ENCODE measurements at regions of chr6 and their contacts with region 1.

Region 1: GRCh38 chr6:42879372-42880239 is at the start of gene RPL7L1:
- DNase-seq: peak; percentile 92
- H3K4me3 ChIP-seq: peak within 1 kb of the TSS; percentile 75 to 83
- H3K27ac ChIP-seq: peak within 1 kb of the TSS; percentile 79 to 98
- H3K4me1 ChIP-seq: peaks cover 16% of the 10 kb centered on the region
- H3K27me3 ChIP-seq: no peaks in the 10 kb centered on the region
- CTCF ChIP-seq: peak in 1 of 3 experiments; percentile 48
- POLR2A ChIP-seq: no peak
- total RNA-seq, gene RPL7L1: 62.6 to 66.8 TPM

Region 2: GRCh38 chr6:41813469-41813868 is 1066.1 kb before region 1 on chr6:
- intact Hi-C with region 1: no loop called
- DNase-seq: no peak
- H3K4me3 ChIP-seq: no peak overlapping the region
- H3K27ac ChIP-seq: no peak overlapping the region
- H3K4me1 ChIP-seq: no peaks in the 10 kb centered on the region
- H3K27me3 ChIP-seq: no peaks in the 10 kb centered on the region
- CTCF ChIP-seq: no peak
- POLR2A ChIP-seq: no peak

Region 3: GRCh38 chr6:42679358-42679757 is 200.2 kb before region 1 on chr6:
- intact Hi-C with region 1: no loop called
- DNase-seq: no peak
- H3K4me3 ChIP-seq: no peak overlapping the region
- H3K27ac ChIP-seq: no peak overlapping the region
- H3K4me1 ChIP-seq: no peaks in the 10 kb centered on the region
- H3K27me3 ChIP-seq: no peaks in the 10 kb centered on the region
- CTCF ChIP-seq: no peak
- POLR2A ChIP-seq: no peak

Region 4: DNA sequence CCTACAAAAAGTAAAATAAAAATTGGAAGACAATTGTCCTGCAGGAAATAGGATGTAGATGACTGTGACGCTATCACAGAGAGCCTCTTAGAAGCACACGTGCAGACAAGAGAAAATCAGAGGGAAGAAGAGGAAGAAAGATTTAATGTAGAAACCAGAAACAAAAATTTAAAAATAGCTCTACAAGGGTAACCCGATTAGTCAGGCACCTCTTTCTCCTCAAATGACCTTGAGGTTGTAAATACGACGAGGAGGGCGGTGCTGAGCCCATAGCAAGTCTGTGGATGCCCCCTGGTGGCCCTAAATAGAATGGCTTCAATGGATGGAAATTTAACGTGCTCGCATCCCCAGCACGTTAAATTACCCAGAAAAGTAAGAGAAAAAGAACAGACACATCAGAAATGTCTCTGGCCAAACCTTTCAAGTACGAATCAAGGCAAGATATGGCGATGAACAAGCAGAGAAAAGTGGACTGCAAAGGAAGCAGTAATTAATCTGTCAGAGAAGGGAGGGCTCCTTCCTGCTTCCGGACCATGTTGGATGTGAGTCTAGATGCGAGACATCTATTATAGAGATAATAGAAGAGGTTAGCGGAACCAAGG is 153.0 kb before region 1 on chr6:
- intact Hi-C with region 1: loop called (anchors 10 kb)
- DNase-seq: peak; percentile 92
- H3K4me3 ChIP-seq: peak overlapping the region; percentile 61 to 62
- H3K27ac ChIP-seq: peak overlapping the region; percentile 34 to 84
- H3K4me1 ChIP-seq: peaks cover 8% of the 10 kb centered on the region
- H3K27me3 ChIP-seq: no peaks in the 10 kb centered on the region
- CTCF ChIP-seq: peak; percentile 90 to 94 (median 91)
- POLR2A ChIP-seq: no peak

Measured in testis (tissue), 5 donors.